Prostate gland (tissue), 2 donors: ENCODE measurements at regions of chr6 and their contacts with region 1.

Region 1: GRCh38 chr6:52664186-52664990 is 6.5 kb upstream of the TMEM14A start:
- DNase-seq: peak; percentile 91
- H3K4me3 ChIP-seq: peak overlapping the region; percentile 55 to 64
- H3K27ac ChIP-seq: peak overlapping the region; percentile 39 to 75
- H3K4me1 ChIP-seq: no peaks in the 10 kb centered on the region
- H3K27me3 ChIP-seq: no peaks in the 10 kb centered on the region
- CTCF ChIP-seq: no peak
- POLR2A ChIP-seq: peak; percentile 92

Region 2: GRCh38 chr6:52497652-52498408 is 166.6 kb before region 1 on chr6:
- intact Hi-C with region 1: loop called (anchors 10 kb)
- DNase-seq: no peak
- H3K4me3 ChIP-seq: no peak overlapping the region
- H3K27ac ChIP-seq: no peak overlapping the region
- H3K4me1 ChIP-seq: no peaks in the 10 kb centered on the region
- H3K27me3 ChIP-seq: no peaks in the 10 kb centered on the region
- CTCF ChIP-seq: no peak
- POLR2A ChIP-seq: no peak

Region 3: DNA sequence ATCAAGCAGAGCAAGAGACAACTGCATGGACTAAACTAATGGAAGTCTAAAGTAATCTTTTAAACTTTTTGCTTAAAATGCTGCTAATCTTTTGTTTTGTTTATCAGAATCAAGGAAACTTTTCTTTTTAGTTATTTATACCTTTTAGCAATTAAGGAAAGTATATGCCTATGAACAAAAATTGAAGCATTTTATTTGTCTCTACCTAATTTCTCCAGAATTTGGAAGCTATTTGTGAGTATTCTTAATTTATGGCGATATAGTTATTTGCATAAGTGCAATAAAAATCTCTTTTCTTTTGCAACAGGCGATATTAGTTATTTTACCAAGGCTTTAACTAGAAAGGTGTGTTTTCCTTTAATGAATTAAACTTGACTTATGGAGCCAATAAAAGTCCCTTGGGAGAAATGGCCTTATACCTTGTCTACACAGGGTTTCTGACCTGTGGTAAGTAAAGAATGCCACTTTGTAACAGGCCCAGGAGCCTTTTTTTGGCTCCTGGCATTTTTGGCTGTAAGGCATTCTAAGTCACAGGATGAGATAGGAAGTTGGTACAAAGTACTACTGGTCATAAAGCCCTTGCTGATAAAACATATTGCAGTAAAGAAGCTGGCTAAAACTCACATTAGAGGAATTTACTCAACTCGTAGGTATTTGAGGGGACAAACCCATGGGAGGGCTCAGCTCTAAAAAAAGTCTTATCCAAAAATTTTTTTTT is 43.7 kb after region 1 on chr6:
- intact Hi-C with region 1: no loop called
- DNase-seq: no peak
- H3K4me3 ChIP-seq: no peak overlapping the region
- H3K27ac ChIP-seq: no peak overlapping the region
- H3K4me1 ChIP-seq: no peaks in the 10 kb centered on the region
- H3K27me3 ChIP-seq: no peaks in the 10 kb centered on the region
- CTCF ChIP-seq: no peak
- POLR2A ChIP-seq: no peak

Region 4: DNA sequence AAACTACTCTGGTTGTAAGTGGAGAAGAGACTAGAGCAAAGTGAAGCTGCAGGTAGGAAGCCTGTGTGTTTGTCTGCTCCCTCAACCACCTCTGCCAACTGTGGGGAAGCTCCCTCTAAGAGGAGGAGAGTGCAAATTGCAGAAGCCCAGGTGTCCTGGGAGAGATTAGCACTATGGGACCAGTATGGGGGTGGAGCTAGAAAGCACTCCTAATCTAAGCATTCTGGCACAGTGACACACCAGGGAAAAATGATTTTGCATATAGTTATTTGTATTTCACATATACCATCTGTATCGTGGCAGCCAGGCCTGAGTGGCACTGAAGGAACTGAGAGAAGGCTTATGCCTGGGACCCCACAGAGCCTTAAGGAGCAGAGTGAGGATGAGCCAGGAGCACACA is 126.5 kb after region 1 on chr6:
- intact Hi-C with region 1: no loop called
- DNase-seq: no peak
- H3K4me3 ChIP-seq: no peak overlapping the region
- H3K27ac ChIP-seq: no peak overlapping the region
- H3K4me1 ChIP-seq: no peaks in the 10 kb centered on the region
- H3K27me3 ChIP-seq: no peaks in the 10 kb centered on the region
- CTCF ChIP-seq: no peak
- POLR2A ChIP-seq: no peak

Region 5: DNA sequence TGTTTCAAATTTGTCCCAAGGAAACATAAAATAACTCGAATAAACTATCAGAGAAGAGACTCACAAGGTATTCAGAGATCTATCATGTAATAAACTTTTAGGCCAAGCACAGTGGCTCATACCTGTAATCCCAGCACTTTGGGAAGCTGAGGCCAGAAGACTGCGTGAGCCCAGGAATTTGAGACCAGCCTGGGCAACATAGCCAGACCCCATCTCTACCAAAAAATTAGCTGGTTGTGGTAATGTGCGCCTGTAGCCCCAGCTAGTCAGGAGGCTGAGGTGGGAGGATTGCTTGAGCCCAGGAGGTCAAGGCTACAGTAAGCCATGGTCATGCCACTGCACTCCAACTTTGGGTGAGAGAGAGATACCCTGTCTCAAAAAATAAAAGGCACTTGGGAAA is 563.5 kb after region 1 on chr6:
- intact Hi-C with region 1: no loop called
- DNase-seq: no peak
- H3K4me3 ChIP-seq: no peak overlapping the region
- H3K27ac ChIP-seq: no peak overlapping the region
- H3K4me1 ChIP-seq: no peaks in the 10 kb centered on the region
- H3K27me3 ChIP-seq: no peaks in the 10 kb centered on the region
- CTCF ChIP-seq: no peak
- POLR2A ChIP-seq: no peak